ENCODE measurements at regions of chr5 and their contacts with region 1.

Region 1: DNA sequence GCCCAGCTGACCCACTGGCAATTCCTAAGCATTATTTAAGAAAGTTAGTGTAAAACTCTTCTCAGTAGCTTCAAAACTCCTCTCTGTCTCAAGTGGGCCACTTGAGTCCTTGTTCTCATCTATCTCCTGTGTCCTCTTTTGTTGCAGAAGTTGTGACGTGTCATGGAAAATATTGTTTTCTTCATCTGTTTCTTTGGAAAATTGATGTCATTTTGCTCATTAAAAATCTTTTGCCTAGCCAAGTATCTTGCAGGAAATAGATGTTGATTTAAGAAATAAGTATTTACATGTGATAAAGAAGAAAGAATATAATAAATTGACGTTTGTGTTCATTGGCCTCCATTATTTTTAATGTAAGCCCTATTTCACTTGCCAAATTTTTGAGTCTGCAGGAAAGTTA is 1158.4 kb upstream of the SEMA6A start:
- DNase-seq: no peak
- ATAC-seq: no peak
- H3K4me3 ChIP-seq: no peak overlapping the region
- H3K27ac ChIP-seq: no peak overlapping the region
- H3K4me1 ChIP-seq: no peaks in the 10 kb centered on the region
- H3K27me3 ChIP-seq: no peaks in the 10 kb centered on the region
- CTCF ChIP-seq: no peak
- POLR2A ChIP-seq: no peak
- RAD21 ChIP-seq: no peak

Region 2: DNA sequence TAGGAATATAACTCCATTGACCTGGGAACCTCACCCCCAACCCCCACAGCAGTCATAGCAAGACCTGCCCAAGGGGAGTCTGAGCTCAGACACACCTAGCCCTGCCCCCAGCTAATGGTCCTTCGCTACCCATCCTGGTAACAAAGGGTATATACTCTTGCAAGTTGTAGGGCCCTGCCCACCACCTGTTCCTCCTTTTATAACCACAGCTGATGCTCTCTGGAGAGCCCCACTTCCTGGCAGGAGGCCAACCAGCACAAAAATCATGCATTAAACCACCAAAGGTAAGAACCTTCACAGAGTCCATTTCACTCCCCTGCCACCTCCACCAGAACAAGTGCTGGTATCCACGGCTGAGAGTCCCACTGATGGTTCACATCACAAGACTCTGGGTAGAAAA is 36.8 kb after region 1 on chr5:
- CTCF ChIA-PET with region 1: no interaction called
- POLR2A ChIA-PET with region 1: no interaction called
- RAD21 ChIA-PET with region 1: no interaction called
- intact Hi-C with region 1: loop called (anchors 2 kb)
- DNase-seq: no peak
- ATAC-seq: no peak
- H3K4me3 ChIP-seq: no peak overlapping the region
- H3K27ac ChIP-seq: no peak overlapping the region
- H3K4me1 ChIP-seq: no peaks in the 10 kb centered on the region
- H3K27me3 ChIP-seq: no peaks in the 10 kb centered on the region
- CTCF ChIP-seq: no peak
- POLR2A ChIP-seq: no peak
- RAD21 ChIP-seq: no peak

Measured in HCT116 (cell line).